Naive thymus-derived CD4-positive, alpha-beta T cell (primary cell): ENCODE measurements at regions of chr10 and their contacts with region 1.

Region 1: DNA sequence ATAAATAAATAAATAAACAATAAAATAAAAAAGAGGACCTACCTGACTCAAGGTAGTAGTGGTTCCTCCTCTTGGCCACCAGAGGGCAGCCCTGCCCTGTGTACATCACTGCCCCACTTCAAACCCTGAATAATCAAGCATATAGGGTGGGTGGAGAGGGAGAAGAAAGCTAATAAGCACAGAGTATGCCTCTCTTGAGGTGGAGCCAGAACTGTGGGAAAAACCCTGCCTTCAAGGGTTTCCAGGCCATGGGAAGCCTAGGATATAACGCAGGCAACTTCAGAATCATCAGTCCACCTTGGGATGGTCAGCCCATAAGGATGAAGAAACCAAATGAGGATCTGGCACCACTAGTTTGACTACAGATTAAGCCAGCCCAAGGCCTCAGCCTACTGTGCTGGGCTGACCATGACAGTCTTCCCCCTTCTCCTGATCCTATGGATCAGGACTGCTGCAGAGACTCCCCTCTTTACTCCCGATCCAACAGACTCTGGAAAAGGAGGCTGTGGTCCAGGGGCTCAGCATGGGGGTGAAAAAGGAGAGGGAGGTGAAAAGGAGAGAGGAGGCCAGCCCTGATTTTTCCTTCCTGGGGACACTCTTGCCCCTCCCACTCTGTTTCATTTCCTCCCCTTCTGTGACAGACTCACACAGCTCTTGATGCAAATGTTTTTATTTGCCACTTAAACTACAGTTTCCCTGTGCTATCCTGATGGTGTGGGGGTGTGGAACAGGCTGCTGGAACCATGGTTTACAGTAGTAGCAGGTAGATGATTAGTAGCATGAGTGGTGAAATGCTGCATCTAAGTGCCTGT is 10.1 kb downstream of the AVPI1 start:
- DNase-seq: peak; percentile 35 to 60 (median 48)
- ATAC-seq: peak; percentile 90
- H3K4me3 ChIP-seq: no peak overlapping the region
- H3K4me3 Mint-ChIP-seq: no peak overlapping the region
- H3K27ac ChIP-seq: no peak overlapping the region
- H3K27ac Mint-ChIP-seq: peak overlapping the region in 1 of 9 donors; percentile 13
- H3K4me1 ChIP-seq: no peaks in the 10 kb centered on the region
- H3K4me1 Mint-ChIP-seq: peaks cover 0 to 16% (median 0%) of the 10 kb centered on the region in 7 donors
- H3K27me3 ChIP-seq: no peaks in the 10 kb centered on the region
- H3K27me3 Mint-ChIP-seq: no peaks in the 10 kb centered on the region

Region 2: GRCh38 chr10:97656777-97657176 is 20.2 kb before region 1 on chr10:
- CTCF ChIA-PET with region 1: no interaction called
- POLR2A ChIA-PET with region 1: no interaction called
- intact Hi-C with region 1: no loop called
- DNase-seq: no peak
- ATAC-seq: no peak
- H3K4me3 ChIP-seq: no peak overlapping the region
- H3K4me3 Mint-ChIP-seq: no peak overlapping the region
- H3K27ac ChIP-seq: no peak overlapping the region
- H3K27ac Mint-ChIP-seq: peak overlapping the region in 1 of 9 donors; percentile 32
- H3K4me1 ChIP-seq: no peaks in the 10 kb centered on the region
- H3K4me1 Mint-ChIP-seq: peaks cover 0 to 7% (median 0%) of the 10 kb centered on the region in 7 donors
- H3K27me3 ChIP-seq: no peaks in the 10 kb centered on the region
- H3K27me3 Mint-ChIP-seq: no peaks in the 10 kb centered on the region

Region 3: GRCh38 chr10:97714048-97714371 is 37.0 kb after region 1 on chr10:
- CTCF ChIA-PET with region 1: interaction called, 5 read pairs
- POLR2A ChIA-PET with region 1: no interaction called
- intact Hi-C with region 1: loop called in 1 of 2 experiments (anchors 1 kb)
- DNase-seq: peak in 8 of 9 donors; percentile 28 to 67 (median 40)
- ATAC-seq: peak; percentile 83
- H3K4me3 ChIP-seq: peak overlapping the region; percentile 69
- H3K4me3 Mint-ChIP-seq: peak overlapping the region; percentile 95 to 100 (median 99)
- H3K27ac ChIP-seq: no peak overlapping the region
- H3K27ac Mint-ChIP-seq: peak overlapping the region in 7 of 9 donors; percentile 44 to 95 (median 80)
- H3K4me1 ChIP-seq: peaks cover 5 to 6% of the 10 kb centered on the region in 2 donors
- H3K4me1 Mint-ChIP-seq: peaks cover 5 to 21% (median 11%) of the 10 kb centered on the region in 7 donors
- H3K27me3 ChIP-seq: no peaks in the 10 kb centered on the region
- H3K27me3 Mint-ChIP-seq: peaks cover 14 to 43% (median 19%) of the 10 kb centered on the region in 5 donors

Region 4: GRCh38 chr10:97927622-97928021 is 250.6 kb after region 1 on chr10:
- CTCF ChIA-PET with region 1: no interaction called
- POLR2A ChIA-PET with region 1: no interaction called
- intact Hi-C with region 1: no loop called
- DNase-seq: no peak
- ATAC-seq: no peak
- H3K4me3 ChIP-seq: no peak overlapping the region
- H3K4me3 Mint-ChIP-seq: no peak overlapping the region
- H3K27ac ChIP-seq: no peak overlapping the region
- H3K27ac Mint-ChIP-seq: no peak overlapping the region
- H3K4me1 ChIP-seq: no peaks in the 10 kb centered on the region
- H3K4me1 Mint-ChIP-seq: peaks cover 0 to 1% (median 0%) of the 10 kb centered on the region in 7 donors
- H3K27me3 ChIP-seq: no peaks in the 10 kb centered on the region
- H3K27me3 Mint-ChIP-seq: peaks cover 12 to 37% (median 25%) of the 10 kb centered on the region in 5 donors

Region 5: GRCh38 chr10:98045785-98046389 is 368.9 kb after region 1 on chr10:
- CTCF ChIA-PET with region 1: interaction called, 4 read pairs
- POLR2A ChIA-PET with region 1: no interaction called
- intact Hi-C with region 1: loop called in 1 of 2 experiments (anchors 1 kb)
- DNase-seq: peak; percentile 24 to 62 (median 53)
- ATAC-seq: peak; percentile 84
- H3K4me3 ChIP-seq: no peak overlapping the region
- H3K4me3 Mint-ChIP-seq: no peak overlapping the region
- H3K27ac ChIP-seq: no peak overlapping the region
- H3K27ac Mint-ChIP-seq: no peak overlapping the region
- H3K4me1 ChIP-seq: no peaks in the 10 kb centered on the region
- H3K4me1 Mint-ChIP-seq: peaks cover 0 to 6% (median 4%) of the 10 kb centered on the region in 7 donors
- H3K27me3 ChIP-seq: peaks cover 0 to 6% of the 10 kb centered on the region in 2 donors
- H3K27me3 Mint-ChIP-seq: peaks cover 29 to 41% (median 30%) of the 10 kb centered on the region in 5 donors